ENCODE measurements at regions of chr9 and their contacts with region 1.

Region 1: GRCh38 chr9:72827950-72828731 is 124.7 kb downstream of the ALDH1A1 start:
- DNase-seq: peak; percentile 33
- H3K4me3 Mint-ChIP-seq: no peak overlapping the region
- H3K27ac Mint-ChIP-seq: peak overlapping the region; percentile 93
- H3K4me1 Mint-ChIP-seq: peaks cover 31% of the 10 kb centered on the region
- H3K27me3 Mint-ChIP-seq: no peaks in the 10 kb centered on the region
- CTCF ChIP-seq: no peak

Region 2: DNA sequence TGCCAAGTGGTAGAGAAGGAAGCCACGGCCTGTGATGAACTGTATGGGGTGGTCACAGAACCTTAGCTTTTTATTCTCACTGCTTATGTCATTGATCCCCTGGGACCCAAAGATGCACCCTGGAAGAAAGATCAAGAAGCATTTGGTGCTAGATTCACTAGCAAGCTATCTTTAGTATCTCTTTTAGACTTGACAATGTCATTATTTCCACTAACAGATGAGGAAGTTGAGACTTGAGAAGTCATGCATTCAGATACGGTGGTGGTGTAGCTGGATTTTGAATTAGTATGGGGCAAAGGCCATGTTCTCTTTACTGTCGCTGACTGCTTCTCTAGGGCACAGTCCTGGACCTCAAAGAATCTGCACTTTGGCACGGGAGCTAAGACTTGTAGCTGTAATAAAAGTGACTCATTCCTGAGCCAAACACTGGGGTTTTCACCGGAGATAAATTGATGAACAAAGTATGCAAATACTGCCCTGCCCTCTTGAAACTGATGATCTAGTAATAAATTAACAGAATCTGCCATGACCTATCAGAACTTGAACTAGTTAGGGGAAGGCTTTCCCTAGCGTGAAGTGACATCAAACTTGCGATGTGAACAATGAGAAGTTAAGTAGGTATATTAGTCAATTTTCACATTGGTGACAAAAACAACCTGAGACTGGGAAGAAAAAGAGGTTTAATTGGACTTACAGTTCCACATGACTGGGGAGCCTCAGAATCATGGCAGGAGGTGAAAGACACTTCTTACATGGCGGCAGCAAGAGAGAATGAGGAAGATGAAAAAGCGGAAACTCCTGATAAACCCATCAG is 673.5 kb before region 1 on chr9:
- CTCF ChIA-PET with region 1: no interaction called
- intact Hi-C with region 1: loop called (anchors 10 kb)
- DNase-seq: peak; percentile 44
- H3K4me3 Mint-ChIP-seq: peak overlapping the region; percentile 52
- H3K27ac Mint-ChIP-seq: peak overlapping the region; percentile 92
- H3K4me1 Mint-ChIP-seq: peaks cover 28% of the 10 kb centered on the region
- H3K27me3 Mint-ChIP-seq: no peaks in the 10 kb centered on the region
- CTCF ChIP-seq: no peak

Region 3: DNA sequence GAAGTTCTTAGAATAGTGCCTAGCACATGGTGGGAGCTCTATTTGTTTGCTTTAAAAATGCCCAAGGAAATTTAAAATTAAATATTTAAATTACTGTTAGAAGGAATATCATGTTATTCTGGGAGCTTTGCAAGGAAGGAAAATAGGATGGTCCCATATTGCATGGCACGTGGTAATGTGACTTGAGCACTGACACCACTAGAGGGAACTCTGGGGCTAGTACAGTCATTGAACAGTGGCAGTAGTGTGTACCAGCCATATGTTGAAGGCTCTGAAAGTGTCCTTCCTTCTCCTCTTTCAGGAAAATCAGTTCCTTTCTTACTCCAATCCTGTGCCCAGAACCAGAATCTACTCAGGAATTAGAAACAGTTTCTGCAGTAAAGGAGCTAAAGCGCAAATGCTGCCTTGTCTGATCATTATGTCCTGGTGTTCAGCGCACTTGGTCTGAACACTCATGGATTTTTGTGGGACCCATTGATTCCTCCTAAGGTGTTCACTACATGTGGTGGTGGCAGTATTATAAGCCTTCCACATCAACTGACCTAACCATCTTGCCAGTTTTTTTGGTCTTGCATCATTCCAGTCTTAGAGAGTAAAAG is 624.8 kb before region 1 on chr9:
- CTCF ChIA-PET with region 1: no interaction called
- intact Hi-C with region 1: loop called (anchors 10 kb)
- DNase-seq: peak; percentile 34
- H3K4me3 Mint-ChIP-seq: no peak overlapping the region
- H3K27ac Mint-ChIP-seq: no peak overlapping the region
- H3K4me1 Mint-ChIP-seq: peaks cover 10% of the 10 kb centered on the region
- H3K27me3 Mint-ChIP-seq: no peaks in the 10 kb centered on the region
- CTCF ChIP-seq: peak; percentile 61

Region 4: GRCh38 chr9:72280913-72281500 is 547.1 kb before region 1 on chr9:
- CTCF ChIA-PET with region 1: interaction called, 11 read pairs
- intact Hi-C with region 1: loop called (anchors 2 kb)
- DNase-seq: peak; percentile 65
- H3K4me3 Mint-ChIP-seq: no peak overlapping the region
- H3K27ac Mint-ChIP-seq: no peak overlapping the region
- H3K4me1 Mint-ChIP-seq: peaks cover 8% of the 10 kb centered on the region
- H3K27me3 Mint-ChIP-seq: no peaks in the 10 kb centered on the region
- CTCF ChIP-seq: peak; percentile 85

Region 5: GRCh38 chr9:72509635-72510034 is 318.5 kb before region 1 on chr9:
- CTCF ChIA-PET with region 1: no interaction called
- intact Hi-C with region 1: no loop called
- DNase-seq: no peak
- H3K4me3 Mint-ChIP-seq: no peak overlapping the region
- H3K27ac Mint-ChIP-seq: peak overlapping the region; percentile 70
- H3K4me1 Mint-ChIP-seq: peaks cover 13% of the 10 kb centered on the region
- H3K27me3 Mint-ChIP-seq: no peaks in the 10 kb centered on the region
- CTCF ChIP-seq: no peak

Region 6: GRCh38 chr9:72557549-72557948 is 270.6 kb before region 1 on chr9:
- CTCF ChIA-PET with region 1: no interaction called
- intact Hi-C with region 1: no loop called
- DNase-seq: peak; percentile 43
- H3K4me3 Mint-ChIP-seq: no peak overlapping the region
- H3K27ac Mint-ChIP-seq: peak overlapping the region; percentile 50
- H3K4me1 Mint-ChIP-seq: peaks cover 23% of the 10 kb centered on the region
- H3K27me3 Mint-ChIP-seq: no peaks in the 10 kb centered on the region
- CTCF ChIP-seq: no peak

Region 7: DNA sequence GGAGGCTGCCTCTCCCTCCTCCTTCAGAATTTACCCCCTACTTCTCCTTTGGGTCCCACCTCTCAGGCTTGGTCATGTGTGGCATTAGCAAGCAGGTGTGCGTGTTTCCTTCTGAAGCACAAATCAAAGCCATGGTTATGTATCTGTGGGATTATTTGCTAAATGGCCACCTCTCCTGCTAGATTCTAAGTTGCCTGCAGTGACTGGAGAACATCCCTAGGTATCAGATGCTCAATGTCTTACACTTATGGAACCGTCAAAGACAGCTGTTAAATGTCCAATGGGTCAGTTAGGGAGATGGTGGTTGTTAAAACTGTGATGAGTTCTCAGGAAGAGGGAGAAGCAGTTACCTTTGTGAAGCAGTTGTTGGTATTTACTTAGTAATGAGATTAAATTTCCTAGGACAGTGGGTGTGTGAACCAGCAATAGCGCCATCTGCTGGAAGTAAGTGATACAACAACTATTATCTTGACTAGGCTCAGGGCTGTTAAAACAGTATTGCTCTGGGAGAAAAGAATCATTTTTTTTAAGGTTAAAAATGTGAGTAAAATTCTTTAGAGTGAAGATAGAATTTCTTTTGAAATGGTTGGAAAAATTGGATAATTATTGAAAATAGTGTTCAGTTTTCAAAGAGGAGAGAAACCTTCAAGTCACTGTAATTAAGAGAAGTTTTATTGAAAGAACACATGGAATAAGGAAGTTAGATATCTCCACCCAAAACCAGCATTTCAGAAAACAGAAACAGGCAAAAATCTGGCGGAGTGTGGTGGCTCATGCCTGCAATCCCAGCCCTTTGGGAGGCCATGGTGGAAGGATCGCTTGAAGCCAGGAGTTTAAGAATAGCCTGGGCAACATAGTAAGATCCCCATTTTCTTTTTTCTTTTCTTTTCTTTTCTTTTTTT is 235.4 kb before region 1 on chr9:
- CTCF ChIA-PET with region 1: no interaction called
- intact Hi-C with region 1: loop called (anchors 5 kb)
- DNase-seq: peak; percentile 7
- H3K4me3 Mint-ChIP-seq: no peak overlapping the region
- H3K27ac Mint-ChIP-seq: no peak overlapping the region
- H3K4me1 Mint-ChIP-seq: peaks cover 30% of the 10 kb centered on the region
- H3K27me3 Mint-ChIP-seq: no peaks in the 10 kb centered on the region
- CTCF ChIP-seq: peak; percentile 43

Measured in Calu3 (cell line).